OCI-LY7 (cell line): ENCODE measurements at regions of chr2 and their contacts with region 1.

Region 1: GRCh38 chr2:144320491-144320890 is 199.4 kb downstream of the ZEB2 start:
- DNase-seq: peak; percentile 49
- H3K4me3 ChIP-seq: no peak overlapping the region
- H3K27ac ChIP-seq: no peak overlapping the region
- H3K4me1 ChIP-seq: peaks cover 43% of the 10 kb centered on the region
- CTCF ChIP-seq: no peak

Region 2: DNA sequence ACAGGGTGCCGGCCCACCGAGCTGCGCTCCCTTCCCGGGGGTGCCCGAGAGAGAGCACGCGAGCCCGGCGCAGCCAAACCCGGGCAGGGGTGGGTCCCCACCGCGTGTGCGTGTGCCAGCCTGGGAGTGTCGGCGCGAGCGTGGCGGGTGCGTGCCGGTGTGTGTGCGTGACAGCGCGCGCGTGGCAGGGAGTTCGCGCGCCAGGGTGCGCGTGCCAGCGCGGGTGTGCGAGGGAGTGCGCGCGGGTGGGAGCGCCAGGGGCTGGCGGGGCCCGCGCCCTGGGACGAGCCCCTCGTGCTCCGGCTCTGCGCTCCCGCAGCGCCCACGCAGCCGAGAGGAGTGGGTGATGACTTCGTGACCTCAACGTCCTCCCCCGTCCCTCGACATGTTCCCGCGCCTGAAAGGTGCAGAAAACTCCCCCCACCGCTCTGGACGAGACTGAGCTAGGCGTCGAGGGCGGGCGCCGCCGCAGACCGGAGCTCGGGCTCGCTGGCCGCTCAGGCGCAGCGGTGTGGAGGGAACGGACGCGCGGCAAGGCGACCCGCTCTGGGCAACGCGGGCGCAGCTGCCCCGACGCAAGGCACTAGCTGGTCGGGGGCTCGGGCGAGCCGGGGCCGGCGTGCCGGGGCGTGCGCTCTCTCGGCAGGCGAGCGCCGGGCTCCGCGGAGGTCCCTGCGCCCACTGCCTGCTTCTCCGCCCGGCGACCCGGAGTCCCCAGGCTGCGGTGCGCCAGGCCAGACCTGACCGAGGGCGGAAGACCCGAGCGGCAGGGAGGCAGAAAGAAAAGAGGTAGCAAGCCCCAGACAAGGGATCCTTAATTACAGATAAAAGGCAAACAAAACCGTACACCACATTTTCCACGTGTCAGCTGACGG is 383.4 kb before region 1 on chr2:
- CTCF ChIA-PET with region 1: no interaction called
- POLR2A ChIA-PET with region 1: no interaction called
- intact Hi-C with region 1: no loop called
- DNase-seq: no peak
- H3K4me3 ChIP-seq: no peak overlapping the region
- H3K27ac ChIP-seq: no peak overlapping the region
- H3K4me1 ChIP-seq: no peaks in the 10 kb centered on the region
- CTCF ChIP-seq: no peak

Region 3: GRCh38 chr2:144111437-144111836 is 209.1 kb before region 1 on chr2:
- CTCF ChIA-PET with region 1: no interaction called
- POLR2A ChIA-PET with region 1: no interaction called
- intact Hi-C with region 1: no loop called
- DNase-seq: no peak
- H3K4me3 ChIP-seq: no peak overlapping the region
- H3K27ac ChIP-seq: no peak overlapping the region
- H3K4me1 ChIP-seq: no peaks in the 10 kb centered on the region
- CTCF ChIP-seq: no peak

Region 4: DNA sequence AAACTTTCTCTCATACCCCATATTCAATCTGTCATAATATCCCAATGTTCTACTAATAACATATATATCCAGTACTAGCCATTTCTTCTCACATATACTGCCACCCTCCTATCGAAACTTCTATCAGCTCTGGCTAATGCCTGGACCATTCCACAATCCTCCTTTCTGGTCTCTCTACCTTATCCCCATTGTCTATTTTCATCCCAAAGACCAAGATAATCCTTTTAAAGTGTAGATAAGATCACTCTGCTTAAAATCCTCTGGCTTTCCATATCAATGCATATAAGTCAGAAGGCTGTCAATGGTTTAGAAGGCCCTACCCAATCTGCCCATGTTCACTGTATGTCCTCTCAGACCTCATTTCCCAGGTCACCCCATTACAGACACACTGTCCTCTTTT is 30.2 kb before region 1 on chr2:
- CTCF ChIA-PET with region 1: no interaction called
- POLR2A ChIA-PET with region 1: interaction called, 13 read pairs
- intact Hi-C with region 1: no loop called
- DNase-seq: no peak
- H3K4me3 ChIP-seq: no peak overlapping the region
- H3K27ac ChIP-seq: no peak overlapping the region
- H3K4me1 ChIP-seq: no peaks in the 10 kb centered on the region
- CTCF ChIP-seq: no peak